GM12878 (cell line): ENCODE measurements at regions of chr10 and their contacts with region 1.

Region 1: DNA sequence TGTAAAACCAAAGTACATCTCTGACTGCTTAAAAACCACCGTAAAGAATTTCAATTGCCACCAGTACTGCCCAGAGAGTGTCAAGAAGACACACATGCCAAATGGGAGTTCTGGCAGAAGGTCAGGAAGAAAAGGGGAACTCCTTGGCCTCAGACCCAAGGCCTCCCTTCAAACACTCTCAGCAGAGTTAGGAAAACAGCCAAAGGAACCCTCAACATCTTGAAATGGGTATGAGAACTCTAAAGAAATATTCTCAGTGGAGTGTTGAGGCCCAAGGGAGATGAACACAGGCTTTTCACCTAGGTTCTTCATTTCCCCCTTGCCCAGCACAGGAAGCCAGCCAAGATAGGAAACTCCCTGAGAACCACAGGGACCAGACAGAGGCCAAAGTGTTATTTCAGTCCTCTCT is 96.1 kb upstream of the ASAH2 start:
- DNase-seq: peak; percentile 89
- ATAC-seq: peak; percentile 96
- H3K4me3 ChIP-seq: no peak overlapping the region
- H3K27ac ChIP-seq: peak overlapping the region; percentile 75
- H3K4me1 ChIP-seq: peaks cover 3% of the 10 kb centered on the region; the same call in 1 of the 2 replicates
- H3K27me3 ChIP-seq: no peaks in the 10 kb centered on the region
- CTCF ChIP-seq: no peak
- EP300 ChIP-seq: peak; percentile 36 to 50; a peak in 1 of 4 replicates
- POLR2A ChIP-seq: no peak
- RAD21 ChIP-seq: no peak

Region 2: DNA sequence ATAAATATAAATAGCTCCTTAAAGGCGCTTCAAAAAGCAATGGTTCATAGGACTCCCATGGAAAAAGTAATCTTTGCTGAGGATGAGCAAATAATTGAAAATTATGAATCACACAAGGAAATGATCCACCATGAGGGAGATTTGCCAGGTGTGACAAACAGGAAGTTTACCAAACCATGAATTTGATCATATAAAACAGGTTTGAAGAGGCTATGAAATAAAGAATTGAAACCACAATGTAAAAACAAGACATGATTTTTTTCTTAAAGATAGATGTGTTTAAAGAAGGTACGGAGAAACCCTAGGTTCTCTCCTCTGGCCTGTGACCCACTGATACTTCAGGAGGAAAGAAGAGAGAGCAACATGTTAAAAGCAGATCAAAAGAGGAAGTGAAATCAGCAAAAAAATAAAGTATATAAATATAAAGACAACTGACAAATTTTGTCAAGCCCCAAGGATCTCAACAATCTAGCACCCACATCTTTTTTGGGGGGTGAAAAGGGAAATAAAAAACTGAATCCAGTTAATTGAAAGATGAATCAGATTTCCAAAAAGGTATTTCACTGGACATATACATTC is 15.2 kb after region 1 on chr10:
- CTCF ChIA-PET with region 1: interaction called, 8 read pairs
- POLR2A ChIA-PET with region 1: no interaction called
- RAD21 ChIA-PET with region 1: interaction called, 6 read pairs
- SMC1A ChIA-PET with region 1: interaction called, 41 read pairs
- in situ Hi-C with region 1: no loop called
- intact Hi-C with region 1: no loop called
- DNase-seq: peak; percentile 79
- ATAC-seq: peak; percentile 90
- H3K4me3 ChIP-seq: peak overlapping the region; percentile 36
- H3K27ac ChIP-seq: peak overlapping the region; percentile 88
- H3K4me1 ChIP-seq: peaks cover 25% of the 10 kb centered on the region
- H3K27me3 ChIP-seq: no peaks in the 10 kb centered on the region
- CTCF ChIP-seq: no peak
- EP300 ChIP-seq: peak in 1 of 2 experiments; percentile 50; a peak in 1 of 4 replicates
- POLR2A ChIP-seq: no peak
- RAD21 ChIP-seq: no peak

Region 3: DNA sequence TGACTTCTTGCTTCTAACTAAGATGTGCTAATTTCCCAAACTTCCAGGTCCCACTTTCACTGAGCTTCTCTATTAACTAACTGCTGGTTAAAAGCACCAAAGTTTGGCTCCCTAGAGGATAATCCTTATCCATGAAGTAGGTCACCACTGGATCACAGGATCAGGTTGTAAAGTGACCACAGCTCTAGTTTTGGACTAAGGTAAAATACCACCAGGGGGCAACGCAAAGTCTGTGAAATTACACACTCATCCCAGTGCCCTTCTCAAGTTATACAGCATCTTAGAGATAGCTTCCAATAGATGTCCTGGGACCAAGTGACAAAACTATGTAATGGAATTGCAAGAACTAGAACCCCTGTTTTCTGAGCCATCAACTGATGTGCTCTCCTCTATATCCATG is 20.3 kb after region 1 on chr10:
- CTCF ChIA-PET with region 1: interaction called, 7 read pairs
- POLR2A ChIA-PET with region 1: no interaction called
- RAD21 ChIA-PET with region 1: interaction called, 3 read pairs
- SMC1A ChIA-PET with region 1: interaction called, 11 read pairs
- in situ Hi-C with region 1: no loop called
- intact Hi-C with region 1: no loop called
- DNase-seq: no peak
- ATAC-seq: peak; percentile 62
- H3K4me3 ChIP-seq: no peak overlapping the region
- H3K27ac ChIP-seq: no peak overlapping the region
- H3K4me1 ChIP-seq: peaks cover 17% of the 10 kb centered on the region
- H3K27me3 ChIP-seq: no peaks in the 10 kb centered on the region
- CTCF ChIP-seq: peak; percentile 29 to 43 (median 30); a peak in 4 of 6 replicates
- EP300 ChIP-seq: no peak
- POLR2A ChIP-seq: no peak
- RAD21 ChIP-seq: peak; percentile 49

Region 4: DNA sequence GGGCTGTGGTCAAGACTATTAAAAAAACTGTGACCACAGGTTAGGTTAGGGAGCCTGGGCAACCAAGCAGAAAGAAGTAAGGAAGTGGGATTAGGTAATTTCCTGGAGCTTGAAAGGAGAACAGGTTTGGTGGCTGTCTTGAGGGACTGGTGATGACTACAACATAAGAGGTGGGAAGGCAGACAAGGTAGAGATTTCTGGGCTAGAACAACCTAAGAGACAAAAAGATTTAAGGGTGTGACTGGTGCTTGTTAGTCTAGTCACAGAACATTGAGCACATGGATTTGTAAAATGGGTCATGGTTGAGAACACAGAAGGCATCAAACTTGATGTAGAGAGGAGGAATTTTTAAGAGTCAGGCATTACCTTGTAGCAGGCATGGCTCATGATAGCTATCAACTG is 27.7 kb after region 1 on chr10:
- CTCF ChIA-PET with region 1: interaction called, 4 read pairs
- POLR2A ChIA-PET with region 1: no interaction called
- RAD21 ChIA-PET with region 1: interaction called, 3 read pairs
- SMC1A ChIA-PET with region 1: interaction called, 10 read pairs
- in situ Hi-C with region 1: no loop called
- intact Hi-C with region 1: no loop called
- DNase-seq: no peak
- ATAC-seq: peak; percentile 51
- H3K4me3 ChIP-seq: no peak overlapping the region
- H3K27ac ChIP-seq: no peak overlapping the region
- H3K4me1 ChIP-seq: peaks cover 14% of the 10 kb centered on the region
- H3K27me3 ChIP-seq: no peaks in the 10 kb centered on the region
- CTCF ChIP-seq: no peak
- EP300 ChIP-seq: no peak
- POLR2A ChIP-seq: no peak
- RAD21 ChIP-seq: no peak